Activated CD8-positive, alpha-beta memory T cell treated with anti-CD3 and anti-CD28 coated beads, Interleukin-2, amount 10 ng/mL, durations not matched to agents 7 days and 5 days (primary cell): ENCODE measurements at regions of chr3 and their contacts with region 1.

Region 1: GRCh38 chr3:129238945-129239706 is 10.3 kb upstream of the COPG1 start:
- DNase-seq: peak; percentile 80
- ATAC-seq: peak; percentile 87
- H3K4me3 Mint-ChIP-seq: peak overlapping the region; percentile 53
- H3K27ac Mint-ChIP-seq: peak overlapping the region; percentile 92
- H3K4me1 Mint-ChIP-seq: peaks cover 48% of the 10 kb centered on the region
- H3K27me3 Mint-ChIP-seq: no peaks in the 10 kb centered on the region

Region 2: GRCh38 chr3:129183569-129184395 is 55.3 kb before region 1 on chr3 and contains the start of gene CNBP:
- CTCF ChIA-PET with region 1: interaction called, 58 read pairs
- DNase-seq: peak; percentile 94
- ATAC-seq: peak; percentile 98
- H3K4me3 Mint-ChIP-seq: peak within 1 kb of the TSS; percentile 87
- H3K27ac Mint-ChIP-seq: peak within 1 kb of the TSS; percentile 95
- H3K4me1 Mint-ChIP-seq: peaks cover 42% of the 10 kb centered on the region
- H3K27me3 Mint-ChIP-seq: no peaks in the 10 kb centered on the region
- total RNA-seq, gene CNBP: 270 to 330 TPM

Region 3: GRCh38 chr3:129224984-129225393 is 14.1 kb before region 1 on chr3:
- CTCF ChIA-PET with region 1: interaction called, 33 read pairs
- DNase-seq: peak; percentile 60
- ATAC-seq: peak; percentile 69
- H3K4me3 Mint-ChIP-seq: peak overlapping the region; percentile 46
- H3K27ac Mint-ChIP-seq: peak overlapping the region; percentile 81
- H3K4me1 Mint-ChIP-seq: peaks cover 39% of the 10 kb centered on the region
- H3K27me3 Mint-ChIP-seq: no peaks in the 10 kb centered on the region

Region 4: DNA sequence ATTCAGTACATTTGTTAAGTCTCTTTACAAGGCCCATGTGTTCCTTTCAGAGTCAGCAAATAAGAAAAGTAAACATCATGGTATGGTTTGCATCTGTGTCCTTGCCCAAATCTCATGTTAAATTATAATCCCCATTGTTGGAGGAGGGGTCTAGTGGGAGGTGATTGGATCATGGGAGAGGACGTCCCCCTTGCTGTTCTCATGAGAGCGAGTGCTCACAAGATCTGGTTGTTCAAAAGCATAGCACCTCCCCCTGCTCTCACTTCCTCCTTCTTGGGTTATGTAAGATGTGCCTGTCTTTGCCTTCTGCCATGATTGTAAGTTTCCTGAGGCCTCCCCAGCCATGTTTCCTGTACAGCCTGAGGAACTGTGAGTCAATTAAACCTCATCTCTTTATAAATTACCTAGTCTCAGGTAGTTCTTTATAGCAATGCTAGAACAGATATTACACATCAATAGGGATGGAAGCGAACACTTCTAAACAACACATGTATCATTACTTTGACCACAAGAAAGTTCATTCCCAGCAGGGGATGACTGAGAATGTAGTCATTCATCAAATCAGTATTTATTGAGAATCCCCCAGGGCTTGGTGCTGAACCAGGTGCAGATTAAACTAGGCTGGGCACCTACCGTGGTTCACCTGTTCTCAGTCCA is 185.2 kb after region 1 on chr3:
- CTCF ChIA-PET with region 1: no interaction called
- DNase-seq: no peak
- ATAC-seq: no peak
- H3K4me3 Mint-ChIP-seq: no peak overlapping the region
- H3K27ac Mint-ChIP-seq: no peak overlapping the region
- H3K4me1 Mint-ChIP-seq: peaks cover 20% of the 10 kb centered on the region
- H3K27me3 Mint-ChIP-seq: peaks cover 5% of the 10 kb centered on the region